ENCODE measurements at regions of chr3 and their contacts with region 1.

Region 1: GRCh38 chr3:184543843-184544512 is 17.6 kb upstream of the EPHB3 start:
- DNase-seq: peak; percentile 82
- H3K4me3 Mint-ChIP-seq: no peak overlapping the region
- H3K27ac Mint-ChIP-seq: no peak overlapping the region
- H3K4me1 Mint-ChIP-seq: no peaks in the 10 kb centered on the region
- H3K27me3 Mint-ChIP-seq: peaks cover 70% of the 10 kb centered on the region
- CTCF ChIP-seq: peak; percentile 91

Region 2: GRCh38 chr3:184362668-184363540 is 181.1 kb before region 1 on chr3:
- CTCF ChIA-PET with region 1: interaction called, 12 read pairs
- POLR2A ChIA-PET with region 1: no interaction called
- intact Hi-C with region 1: no loop called
- DNase-seq: peak; percentile 98
- H3K4me3 Mint-ChIP-seq: peak overlapping the region; percentile 93
- H3K27ac Mint-ChIP-seq: peak overlapping the region; percentile 89
- H3K4me1 Mint-ChIP-seq: peaks cover 27% of the 10 kb centered on the region
- H3K27me3 Mint-ChIP-seq: no peaks in the 10 kb centered on the region
- CTCF ChIP-seq: peak; percentile 45

Region 3: GRCh38 chr3:184417619-184418327 is 126.2 kb before region 1 on chr3:
- CTCF ChIA-PET with region 1: interaction called, 47 read pairs
- POLR2A ChIA-PET with region 1: no interaction called
- intact Hi-C with region 1: loop called (anchors 1 kb)
- DNase-seq: peak; percentile 72
- H3K4me3 Mint-ChIP-seq: no peak overlapping the region
- H3K27ac Mint-ChIP-seq: no peak overlapping the region
- H3K4me1 Mint-ChIP-seq: no peaks in the 10 kb centered on the region
- H3K27me3 Mint-ChIP-seq: peaks cover 2% of the 10 kb centered on the region
- CTCF ChIP-seq: peak; percentile 91

Region 4: GRCh38 chr3:184474897-184475296 is 69.1 kb before region 1 on chr3:
- CTCF ChIA-PET with region 1: interaction called, 162 read pairs
- POLR2A ChIA-PET with region 1: no interaction called
- intact Hi-C with region 1: no loop called
- DNase-seq: no peak
- H3K4me3 Mint-ChIP-seq: no peak overlapping the region
- H3K27ac Mint-ChIP-seq: no peak overlapping the region
- H3K4me1 Mint-ChIP-seq: no peaks in the 10 kb centered on the region
- H3K27me3 Mint-ChIP-seq: peaks cover 90% of the 10 kb centered on the region
- CTCF ChIP-seq: no peak

Region 5: DNA sequence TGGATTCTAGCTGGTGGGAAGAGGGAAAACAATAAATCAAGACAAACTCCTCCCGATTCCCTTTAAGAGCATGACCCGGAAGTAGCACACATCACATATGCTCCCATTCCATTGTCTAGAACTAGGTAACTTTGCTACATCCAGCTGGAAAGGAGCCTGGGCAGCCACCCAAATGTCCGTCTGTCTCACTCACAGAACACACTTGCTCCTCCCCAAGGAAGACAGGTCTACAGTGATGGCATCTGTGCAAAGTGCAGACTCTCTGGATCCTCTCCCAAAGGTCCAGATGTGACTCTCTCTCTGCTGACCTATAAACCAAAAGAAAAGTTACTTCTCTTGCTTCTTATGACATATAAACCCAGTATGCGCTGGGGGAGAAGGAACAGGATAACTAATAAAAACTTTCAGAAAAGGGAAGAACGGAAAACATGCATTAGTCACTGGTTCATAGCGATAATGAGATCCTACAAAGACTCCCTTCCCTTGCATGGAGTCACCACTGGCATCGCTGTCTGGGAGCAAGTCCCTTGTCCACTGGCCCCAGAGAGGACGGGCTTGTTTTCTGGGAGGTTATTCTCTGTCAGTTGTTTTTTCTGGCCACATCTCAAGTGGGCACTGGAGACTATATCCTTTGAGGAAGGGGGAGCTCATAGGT is 12.2 kb before region 1 on chr3:
- CTCF ChIA-PET with region 1: interaction called, 18 read pairs
- POLR2A ChIA-PET with region 1: no interaction called
- intact Hi-C with region 1: no loop called
- DNase-seq: no peak
- H3K4me3 Mint-ChIP-seq: no peak overlapping the region
- H3K27ac Mint-ChIP-seq: no peak overlapping the region
- H3K4me1 Mint-ChIP-seq: no peaks in the 10 kb centered on the region
- H3K27me3 Mint-ChIP-seq: peaks cover 58% of the 10 kb centered on the region
- CTCF ChIP-seq: no peak

Measured in MCF 10A (cell line).